Activated B cell treated with CpG ODN at 0.5 μM for 24 hours (primary cell): ENCODE measurements at regions of chr7 and their contacts with region 1.

Region 1: DNA sequence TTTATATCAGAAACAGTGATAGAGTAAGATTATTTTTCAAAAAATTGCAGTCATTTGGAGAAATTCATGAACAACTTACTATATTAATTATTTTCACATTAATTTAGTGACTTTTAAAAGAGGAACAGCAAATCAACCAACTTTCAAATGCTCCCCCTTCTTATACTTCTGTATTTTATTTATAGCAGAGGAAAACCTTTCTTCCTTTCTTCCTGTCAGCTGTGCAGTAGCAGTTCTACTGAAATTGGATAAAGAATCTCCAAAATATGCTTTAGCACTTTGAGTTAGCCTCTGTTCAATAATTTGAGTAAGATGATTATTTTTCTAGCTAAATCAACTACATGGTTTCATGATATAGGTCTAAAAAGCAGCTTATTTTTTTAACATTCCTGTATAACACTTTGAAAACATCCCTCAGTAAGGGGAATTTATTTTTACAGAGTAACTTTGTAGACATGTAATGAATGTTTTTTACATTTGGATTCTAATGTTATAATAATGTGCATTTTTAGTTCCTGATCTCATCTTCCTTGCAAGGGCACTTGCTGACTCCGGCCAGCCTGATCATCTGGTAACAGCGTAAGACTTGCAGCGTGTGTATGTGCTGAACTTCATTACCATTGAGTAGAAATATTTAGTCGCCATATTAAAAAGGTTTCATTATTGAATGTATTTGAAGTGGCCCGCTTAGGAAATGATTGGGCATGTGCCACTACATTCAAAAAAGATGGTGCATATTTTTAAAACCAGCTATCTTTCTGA is 158.3 kb upstream of the HDAC9 start:
- DNase-seq: no peak
- ATAC-seq: peak; percentile 51
- H3K4me3 Mint-ChIP-seq: peak overlapping the region; percentile 71
- H3K27ac Mint-ChIP-seq: peak overlapping the region; percentile 78
- H3K4me1 Mint-ChIP-seq: peaks cover 72% of the 10 kb centered on the region
- H3K27me3 Mint-ChIP-seq: no peaks in the 10 kb centered on the region
- CTCF ChIP-seq: no peak

Region 2: DNA sequence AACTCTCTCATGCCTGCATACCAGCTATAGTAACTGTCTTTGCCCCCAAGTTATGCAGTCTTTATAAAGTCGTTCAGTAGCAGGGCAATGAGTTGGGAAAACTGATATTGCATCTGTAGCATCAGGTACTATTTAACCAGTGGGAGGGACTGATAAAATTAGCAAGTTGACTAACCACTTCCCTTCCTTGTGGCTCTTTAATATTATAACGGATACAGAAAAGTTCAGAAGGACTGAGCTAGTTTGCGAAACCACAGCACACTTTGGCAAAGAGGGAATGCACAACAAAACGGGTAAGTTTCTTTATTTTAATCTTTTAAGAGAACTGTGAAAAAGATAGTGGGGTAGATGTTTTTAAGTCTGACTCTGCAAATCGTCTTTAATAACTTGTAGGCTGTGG is 47.0 kb before region 1 on chr7:
- CTCF ChIA-PET with region 1: no interaction called
- POLR2A ChIA-PET with region 1: interaction called, 3 read pairs
- intact Hi-C with region 1: loop called (anchors 2 kb)
- DNase-seq: no peak
- ATAC-seq: peak; percentile 55
- H3K4me3 Mint-ChIP-seq: peak overlapping the region; percentile 83
- H3K27ac Mint-ChIP-seq: peak overlapping the region; percentile 86
- H3K4me1 Mint-ChIP-seq: peaks cover 63% of the 10 kb centered on the region
- H3K27me3 Mint-ChIP-seq: no peaks in the 10 kb centered on the region
- CTCF ChIP-seq: no peak

Region 3: DNA sequence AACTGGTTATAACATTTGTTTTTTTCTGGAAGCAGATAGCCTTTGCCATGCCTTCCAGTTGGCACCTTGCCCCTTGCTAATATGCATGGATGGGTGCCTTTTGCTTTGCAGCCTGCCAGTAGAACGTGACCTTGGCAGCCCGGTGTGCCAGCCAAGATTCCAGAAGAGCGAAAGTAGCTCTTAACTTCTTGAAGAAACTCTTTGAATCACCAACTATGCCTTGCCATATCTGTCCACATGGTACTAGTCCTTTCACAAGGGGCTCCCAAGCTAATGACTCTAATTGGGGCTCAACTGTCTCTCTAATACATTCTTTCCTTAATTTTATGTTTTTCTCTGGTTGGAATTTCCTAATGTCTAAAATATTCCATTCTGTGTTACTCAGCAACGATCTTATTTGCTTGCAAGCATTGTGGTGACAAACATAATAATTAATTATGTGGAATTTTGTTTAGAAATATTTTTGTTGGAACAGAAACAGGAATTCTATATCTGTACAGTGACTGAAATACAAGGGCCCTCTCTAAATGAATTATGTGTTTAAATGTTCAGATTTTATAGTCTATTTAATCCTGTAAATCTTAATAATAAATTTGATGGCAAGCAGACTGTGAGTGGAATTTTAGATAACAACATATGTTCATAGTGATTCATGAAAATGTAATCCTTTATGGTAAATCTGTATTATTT is 204.1 kb after region 1 on chr7:
- CTCF ChIA-PET with region 1: no interaction called
- POLR2A ChIA-PET with region 1: no interaction called
- intact Hi-C with region 1: no loop called
- DNase-seq: no peak
- ATAC-seq: no peak
- H3K4me3 Mint-ChIP-seq: no peak overlapping the region
- H3K27ac Mint-ChIP-seq: peak overlapping the region; percentile 16
- H3K4me1 Mint-ChIP-seq: peaks cover 64% of the 10 kb centered on the region
- H3K27me3 Mint-ChIP-seq: no peaks in the 10 kb centered on the region
- CTCF ChIP-seq: no peak